Posterior vena cava (tissue), 2 donors: ENCODE measurements at regions of chr4 and their contacts with region 1.

Region 1: GRCh38 chr4:40736910-40737309 is 12.8 kb upstream of the NSUN7 start:
- DNase-seq: no peak

Region 2: GRCh38 chr4:40492691-40493090 is 244.2 kb before region 1 on chr4:
- intact Hi-C with region 1: no loop called
- DNase-seq: no peak

Region 3: GRCh38 chr4:40908702-40909362 is 171.9 kb after region 1 on chr4:
- intact Hi-C with region 1: loop called in 1 of 2 experiments (anchors 10 kb)
- DNase-seq: peak; percentile 86